Activated CD4-positive, alpha-beta T cell treated with anti-CD3 and anti-CD28 coated beads, Interleukin-2, amount 10 ng/mL, durations not matched to agents 24 days and 14 days (primary cell): ENCODE measurements at regions of chr18 and their contacts with region 1.

Region 1: GRCh38 chr18:3771121-3771971 is 321.4 kb downstream of the TGIF1 start:
- DNase-seq: peak; percentile 96
- H3K4me3 Mint-ChIP-seq: peak overlapping the region; percentile 63
- H3K27ac Mint-ChIP-seq: no peak overlapping the region
- H3K4me1 Mint-ChIP-seq: peaks cover 6% of the 10 kb centered on the region
- H3K27me3 Mint-ChIP-seq: peaks cover 45% of the 10 kb centered on the region

Region 2: GRCh38 chr18:3889803-3890202 is 118.5 kb after region 1 on chr18:
- intact Hi-C with region 1: no loop called
- DNase-seq: no peak
- H3K4me3 Mint-ChIP-seq: no peak overlapping the region
- H3K27ac Mint-ChIP-seq: no peak overlapping the region
- H3K4me1 Mint-ChIP-seq: no peaks in the 10 kb centered on the region
- H3K27me3 Mint-ChIP-seq: peaks cover 10% of the 10 kb centered on the region

Region 3: GRCh38 chr18:3995476-3996102 is 224.2 kb after region 1 on chr18:
- intact Hi-C with region 1: loop called (anchors 1 kb)
- DNase-seq: peak; percentile 90
- H3K4me3 Mint-ChIP-seq: no peak overlapping the region
- H3K27ac Mint-ChIP-seq: no peak overlapping the region
- H3K4me1 Mint-ChIP-seq: peaks cover 3% of the 10 kb centered on the region
- H3K27me3 Mint-ChIP-seq: peaks cover 15% of the 10 kb centered on the region

Region 4: GRCh38 chr18:4068552-4069158 is 297.3 kb after region 1 on chr18:
- intact Hi-C with region 1: loop called (anchors 1 kb)
- DNase-seq: peak; percentile 79
- H3K4me3 Mint-ChIP-seq: no peak overlapping the region
- H3K27ac Mint-ChIP-seq: no peak overlapping the region
- H3K4me1 Mint-ChIP-seq: no peaks in the 10 kb centered on the region
- H3K27me3 Mint-ChIP-seq: no peaks in the 10 kb centered on the region